ENCODE measurements at regions of chr17 and their contacts with region 1.

Region 1: GRCh38 chr17:10226930-10227685 is 28.7 kb upstream of the GAS7 start:
- DNase-seq: peak; percentile 46 to 82 (median 77)
- ATAC-seq: peak; percentile 71 to 76
- H3K4me3 ChIP-seq: no peak overlapping the region
- H3K27ac ChIP-seq: no peak overlapping the region
- H3K4me1 ChIP-seq: no peaks in the 10 kb centered on the region
- H3K27me3 ChIP-seq: no peaks in the 10 kb centered on the region

Region 2: GRCh38 chr17:9968902-9969617 is 258.0 kb before region 1 on chr17:
- intact Hi-C with region 1: loop called in 3 of 4 experiments (anchors 5 to 10 kb)
- DNase-seq: no peak
- ATAC-seq: no peak
- H3K4me3 ChIP-seq: no peak overlapping the region
- H3K27ac ChIP-seq: no peak overlapping the region
- H3K4me1 ChIP-seq: peaks cover 7% of the 10 kb centered on the region
- H3K27me3 ChIP-seq: no peaks in the 10 kb centered on the region

Region 3: GRCh38 chr17:9977180-9977575 is 249.9 kb before region 1 on chr17:
- intact Hi-C with region 1: loop called in 1 of 4 experiments (anchors 5 kb)
- DNase-seq: no peak
- ATAC-seq: no peak
- H3K4me3 ChIP-seq: no peak overlapping the region
- H3K27ac ChIP-seq: no peak overlapping the region
- H3K4me1 ChIP-seq: peaks cover 5% of the 10 kb centered on the region
- H3K27me3 ChIP-seq: no peaks in the 10 kb centered on the region

Region 4: DNA sequence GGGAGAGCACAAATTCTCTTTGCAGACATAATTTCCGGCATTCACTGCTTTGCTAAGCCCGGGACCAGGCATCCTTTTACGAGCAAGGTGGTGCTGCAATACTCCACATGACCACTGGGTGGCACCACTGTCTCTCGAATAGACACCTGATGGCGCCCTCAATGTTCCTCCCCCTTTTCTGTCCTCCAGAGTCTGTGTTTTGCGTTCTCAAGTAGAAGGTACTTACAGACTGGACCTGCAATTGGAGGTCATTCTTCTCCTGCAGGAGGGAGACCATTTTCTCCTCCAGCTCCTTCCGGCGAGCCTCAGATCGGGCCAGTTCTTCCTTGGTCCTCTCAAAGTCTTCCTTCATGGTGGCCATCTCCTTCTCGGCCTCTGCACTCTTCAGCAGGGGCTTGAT is 100.5 kb after region 1 on chr17:
- intact Hi-C with region 1: no loop called
- DNase-seq: peak; percentile 78 to 92 (median 86)
- ATAC-seq: peak; percentile 48 to 72
- H3K4me3 ChIP-seq: no peak overlapping the region
- H3K27ac ChIP-seq: no peak overlapping the region
- H3K4me1 ChIP-seq: no peaks in the 10 kb centered on the region
- H3K27me3 ChIP-seq: no peaks in the 10 kb centered on the region

Measured in right cardiac atrium (tissue), 5 donors.